Activated CD8-positive, alpha-beta memory T cell treated with anti-CD3 and anti-CD28 coated beads, Interleukin-2, amount 10 ng/mL, durations not matched to agents 7 days and 5 days (primary cell): ENCODE measurements at regions of chr11 and their contacts with region 1.

Region 1: GRCh38 chr11:126440792-126441514 is 85.5 kb downstream of the ST3GAL4 start:
- DNase-seq: peak; percentile 78
- ATAC-seq: peak; percentile 79
- H3K4me3 Mint-ChIP-seq: no peak overlapping the region
- H3K27ac Mint-ChIP-seq: no peak overlapping the region
- H3K4me1 Mint-ChIP-seq: peaks cover 3% of the 10 kb centered on the region
- H3K27me3 Mint-ChIP-seq: peaks cover 15% of the 10 kb centered on the region

Region 2: GRCh38 chr11:126341760-126342161 is 99.2 kb before region 1 on chr11:
- CTCF ChIA-PET with region 1: no interaction called
- DNase-seq: no peak
- ATAC-seq: no peak
- H3K4me3 Mint-ChIP-seq: no peak overlapping the region
- H3K27ac Mint-ChIP-seq: peak overlapping the region; percentile 34
- H3K4me1 Mint-ChIP-seq: peaks cover 26% of the 10 kb centered on the region
- H3K27me3 Mint-ChIP-seq: no peaks in the 10 kb centered on the region

Region 3: GRCh38 chr11:126366065-126366785 is 74.7 kb before region 1 on chr11:
- CTCF ChIA-PET with region 1: no interaction called
- DNase-seq: no peak
- ATAC-seq: no peak
- H3K4me3 Mint-ChIP-seq: no peak overlapping the region
- H3K27ac Mint-ChIP-seq: no peak overlapping the region
- H3K4me1 Mint-ChIP-seq: no peaks in the 10 kb centered on the region
- H3K27me3 Mint-ChIP-seq: no peaks in the 10 kb centered on the region

Region 4: GRCh38 chr11:126419801-126420697 is 20.9 kb before region 1 on chr11:
- CTCF ChIA-PET with region 1: interaction called, 10 read pairs
- DNase-seq: no peak
- ATAC-seq: no peak
- H3K4me3 Mint-ChIP-seq: no peak overlapping the region
- H3K27ac Mint-ChIP-seq: no peak overlapping the region
- H3K4me1 Mint-ChIP-seq: peaks cover 21% of the 10 kb centered on the region
- H3K27me3 Mint-ChIP-seq: peaks cover 9% of the 10 kb centered on the region

Region 5: GRCh38 chr11:126465573-126466188 is 24.7 kb after region 1 on chr11:
- CTCF ChIA-PET with region 1: interaction called, 14 read pairs
- DNase-seq: peak; percentile 64
- ATAC-seq: peak; percentile 76
- H3K4me3 Mint-ChIP-seq: no peak overlapping the region
- H3K27ac Mint-ChIP-seq: peak overlapping the region; percentile 65
- H3K4me1 Mint-ChIP-seq: peaks cover 20% of the 10 kb centered on the region
- H3K27me3 Mint-ChIP-seq: peaks cover 13% of the 10 kb centered on the region

Region 6: DNA sequence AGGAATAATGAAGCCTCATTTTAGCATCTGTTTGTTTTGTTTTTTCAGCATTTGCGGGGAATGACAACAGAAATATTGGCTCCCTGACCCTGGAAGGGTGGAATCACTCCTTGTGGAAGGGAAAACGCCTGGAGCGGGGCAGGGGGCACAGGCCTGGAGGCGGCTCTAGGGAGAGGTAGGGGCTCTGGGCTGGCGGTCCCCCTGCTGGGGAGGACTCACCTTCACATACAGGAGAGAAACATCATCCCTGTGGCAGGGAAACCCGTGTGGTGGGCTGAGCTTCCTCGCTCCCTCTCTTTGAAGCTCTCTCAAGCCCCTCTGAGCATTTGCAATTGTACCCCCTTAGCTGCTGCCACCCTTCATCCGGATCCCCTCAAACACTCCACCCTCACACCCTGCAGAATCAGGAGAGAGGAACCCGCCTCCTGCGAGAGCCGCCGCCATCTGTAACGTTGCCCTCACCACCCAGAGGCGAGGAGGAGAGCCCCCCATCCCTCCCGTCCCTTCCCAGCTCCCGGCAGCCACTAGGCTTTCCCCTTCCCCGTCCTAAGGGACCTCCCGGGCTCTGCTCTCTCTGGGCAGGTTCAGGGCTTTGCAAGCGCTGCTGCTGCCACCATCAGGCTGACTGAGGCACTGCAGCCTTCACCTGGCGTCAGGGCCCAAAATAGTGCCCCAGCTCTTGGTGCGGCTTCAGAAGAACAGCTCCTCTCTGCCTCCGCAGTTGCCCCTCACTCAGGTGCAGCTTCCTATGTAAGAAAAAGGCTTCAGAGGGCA is 549.2 kb after region 1 on chr11:
- CTCF ChIA-PET with region 1: interaction called, 17 read pairs
- DNase-seq: peak; percentile 67
- ATAC-seq: peak; percentile 70
- H3K4me3 Mint-ChIP-seq: no peak overlapping the region
- H3K27ac Mint-ChIP-seq: no peak overlapping the region
- H3K4me1 Mint-ChIP-seq: no peaks in the 10 kb centered on the region
- H3K27me3 Mint-ChIP-seq: peaks cover 10% of the 10 kb centered on the region